GM12878 (cell line): ENCODE measurements at regions of chr5 and their contacts with region 1.

Region 1: GRCh38 chr5:154850255-154851062 is at the start of gene FAXDC2:
- DNase-seq: no peak
- ATAC-seq: peak; percentile 80
- H3K4me3 ChIP-seq: no peak within 1 kb of the TSS
- H3K27ac ChIP-seq: no peak within 1 kb of the TSS
- H3K4me1 ChIP-seq: no peaks in the 10 kb centered on the region
- H3K27me3 ChIP-seq: no peaks in the 10 kb centered on the region
- CTCF ChIP-seq: no peak
- EP300 ChIP-seq: no peak
- POLR2A ChIP-seq: no peak
- RAD21 ChIP-seq: no peak
- polyA plus RNA-seq, gene FAXDC2: 0.13 to 0.32 TPM

Region 2: GRCh38 chr5:154818471-154819116 is 31.9 kb before region 1 on chr5:
- CTCF ChIA-PET with region 1: no interaction called
- POLR2A ChIA-PET with region 1: no interaction called
- RAD21 ChIA-PET with region 1: interaction called, 3 read pairs
- SMC1A ChIA-PET with region 1: interaction called, 3 read pairs
- in situ Hi-C with region 1: loop called (anchors 5 kb)
- intact Hi-C with region 1: no loop called
- DNase-seq: no peak
- ATAC-seq: no peak
- H3K4me3 ChIP-seq: no peak overlapping the region
- H3K27ac ChIP-seq: no peak overlapping the region
- H3K4me1 ChIP-seq: no peaks in the 10 kb centered on the region
- H3K27me3 ChIP-seq: no peaks in the 10 kb centered on the region
- CTCF ChIP-seq: no peak
- EP300 ChIP-seq: no peak
- POLR2A ChIP-seq: no peak
- RAD21 ChIP-seq: no peak

Region 3: GRCh38 chr5:155017610-155018009 is 167.2 kb after region 1 on chr5:
- CTCF ChIA-PET with region 1: no interaction called
- POLR2A ChIA-PET with region 1: no interaction called
- RAD21 ChIA-PET with region 1: no interaction called
- SMC1A ChIA-PET with region 1: no interaction called
- in situ Hi-C with region 1: no loop called
- intact Hi-C with region 1: no loop called
- DNase-seq: no peak
- ATAC-seq: peak; percentile 85
- H3K4me3 ChIP-seq: no peak overlapping the region
- H3K27ac ChIP-seq: no peak overlapping the region
- H3K4me1 ChIP-seq: no peaks in the 10 kb centered on the region
- H3K27me3 ChIP-seq: no peaks in the 10 kb centered on the region
- CTCF ChIP-seq: no peak
- EP300 ChIP-seq: no peak
- POLR2A ChIP-seq: no peak
- RAD21 ChIP-seq: no peak